ENCODE measurements at regions of chr9 and their contacts with region 1.

Region 1: GRCh38 chr9:13857521-13857920 is 456.4 kb downstream of the NFIB start:
- DNase-seq: no peak
- ATAC-seq: no peak

Region 2: DNA sequence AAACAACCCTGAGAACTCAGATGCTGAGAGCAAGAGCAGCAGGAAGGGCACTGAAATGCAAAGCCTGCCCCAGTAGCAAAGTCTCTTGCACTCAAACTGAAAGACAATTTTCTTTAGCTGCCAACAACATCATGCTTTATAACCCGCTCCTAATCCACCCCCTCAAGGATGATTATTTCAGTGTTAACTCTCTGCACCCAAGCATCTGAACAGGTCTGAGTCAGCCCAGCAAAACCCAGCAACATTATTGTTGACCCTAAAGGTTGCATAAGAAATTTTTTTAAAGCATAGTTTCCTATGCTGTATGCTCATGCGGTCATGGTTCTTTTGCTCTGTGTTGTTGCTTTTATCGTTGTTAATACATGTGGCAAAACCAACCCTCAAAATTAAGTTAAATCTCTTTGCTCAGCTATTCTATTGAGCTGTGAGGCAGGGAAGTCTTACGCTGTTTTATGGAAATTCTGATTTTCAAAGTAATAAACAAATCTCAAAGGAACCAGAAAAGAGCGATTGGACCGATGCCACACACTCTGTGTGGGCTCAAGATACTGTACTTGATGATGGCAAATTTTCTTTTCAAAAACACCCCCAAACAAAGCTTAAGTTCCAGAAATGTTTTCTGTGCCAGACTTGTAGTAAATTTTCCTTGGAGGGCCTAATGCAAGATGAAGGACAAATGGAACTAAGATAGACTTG is 137.4 kb before region 1 on chr9:
- intact Hi-C with region 1: loop called (anchors 10 kb)
- DNase-seq: no peak
- ATAC-seq: no peak